SK-N-SH (cell line): ENCODE measurements at regions of chr22 and their contacts with region 1.

Region 1: DNA sequence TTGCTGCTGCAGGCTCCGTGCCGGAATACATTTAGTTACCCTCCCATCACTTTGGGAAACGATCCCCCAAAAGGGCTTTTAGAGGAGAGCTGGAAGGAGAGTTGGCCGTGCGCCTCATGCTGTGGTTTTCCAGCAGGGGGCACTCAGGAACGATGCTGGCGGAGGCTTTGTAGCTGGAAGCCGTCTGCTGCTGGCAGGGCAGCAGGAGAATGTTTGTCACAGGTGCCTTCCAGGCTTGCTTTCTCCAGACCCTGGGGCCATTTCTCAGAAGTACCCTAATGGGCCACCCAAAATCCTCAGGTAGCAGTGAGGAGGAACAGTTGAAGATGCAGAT is 30.0 kb upstream of the CABP7 start:
- DNase-seq: peak; percentile 79
- H3K4me3 ChIP-seq: peak overlapping the region in 1 of 2 experiments; percentile 49; a peak in 1 of 4 replicates
- H3K27ac ChIP-seq: no peak overlapping the region
- H3K4me1 ChIP-seq: peaks cover 15 to 43% of the 10 kb centered on the region in 2 experiments
- H3K27me3 ChIP-seq: no peaks in the 10 kb centered on the region
- CTCF ChIP-seq: peak; percentile 82
- EP300 ChIP-seq: no peak
- RAD21 ChIP-seq: peak; percentile 87

Region 2: GRCh38 chr22:29487426-29487986 is 202.3 kb before region 1 on chr22:
- CTCF ChIA-PET with region 1: no interaction called
- POLR2A ChIA-PET with region 1: no interaction called
- DNase-seq: no peak
- H3K4me3 ChIP-seq: no peak overlapping the region
- H3K27ac ChIP-seq: no peak overlapping the region
- H3K4me1 ChIP-seq: no peaks in the 10 kb centered on the region; a peak in 1 of 4 replicates
- H3K27me3 ChIP-seq: no peaks in the 10 kb centered on the region
- CTCF ChIP-seq: no peak
- EP300 ChIP-seq: no peak
- RAD21 ChIP-seq: no peak

Region 3: DNA sequence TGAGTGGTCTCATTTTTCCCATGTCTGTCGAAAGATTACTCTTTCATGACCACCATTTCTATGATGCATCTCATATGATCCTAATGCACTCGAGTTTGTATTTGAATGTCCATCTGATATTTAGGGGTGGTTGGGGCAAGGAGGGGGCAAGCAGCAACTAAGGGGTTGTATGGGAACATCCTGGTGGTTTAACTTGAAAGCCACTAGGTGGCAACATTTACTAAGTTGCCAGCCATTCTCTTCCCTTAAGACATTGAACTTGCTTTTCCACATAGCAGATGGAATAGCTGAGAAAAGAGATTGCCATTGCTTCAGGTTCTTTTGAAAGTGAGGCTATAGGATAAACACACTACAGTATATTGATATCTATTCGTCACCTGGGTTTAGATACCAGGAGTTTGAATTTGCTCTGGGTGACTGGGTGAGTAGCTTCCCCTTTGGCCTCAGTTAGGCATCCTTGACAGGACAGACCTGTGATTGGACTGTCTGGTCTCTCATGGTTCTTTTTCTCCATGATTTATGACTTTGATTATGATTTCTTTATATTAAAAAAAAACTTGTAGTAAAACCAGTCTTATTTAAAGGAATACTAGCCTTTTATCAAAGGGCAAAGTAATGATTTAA is 54.0 kb before region 1 on chr22:
- CTCF ChIA-PET with region 1: interaction called, 17 read pairs
- POLR2A ChIA-PET with region 1: no interaction called
- DNase-seq: peak; percentile 60
- H3K4me3 ChIP-seq: no peak overlapping the region; a peak in 1 of 4 replicates
- H3K27ac ChIP-seq: no peak overlapping the region
- H3K4me1 ChIP-seq: peaks cover 0 to 19% of the 10 kb centered on the region in 2 experiments; a peak in 2 of 4 replicates
- H3K27me3 ChIP-seq: no peaks in the 10 kb centered on the region
- CTCF ChIP-seq: peak; percentile 79
- EP300 ChIP-seq: no peak
- RAD21 ChIP-seq: peak; percentile 91

Region 4: GRCh38 chr22:29663180-29663821 is 26.5 kb before region 1 on chr22:
- CTCF ChIA-PET with region 1: interaction called, 13 read pairs
- POLR2A ChIA-PET with region 1: no interaction called
- DNase-seq: no peak
- H3K4me3 ChIP-seq: no peak overlapping the region
- H3K27ac ChIP-seq: no peak overlapping the region
- H3K4me1 ChIP-seq: no peaks in the 10 kb centered on the region; a peak in 1 of 4 replicates
- H3K27me3 ChIP-seq: no peaks in the 10 kb centered on the region
- CTCF ChIP-seq: no peak
- EP300 ChIP-seq: no peak
- RAD21 ChIP-seq: no peak

Region 5: GRCh38 chr22:29679316-29679715 is 10.5 kb before region 1 on chr22:
- CTCF ChIA-PET with region 1: interaction called, 25 read pairs
- POLR2A ChIA-PET with region 1: no interaction called
- DNase-seq: no peak
- H3K4me3 ChIP-seq: no peak overlapping the region
- H3K27ac ChIP-seq: no peak overlapping the region
- H3K4me1 ChIP-seq: no peaks in the 10 kb centered on the region
- H3K27me3 ChIP-seq: no peaks in the 10 kb centered on the region
- CTCF ChIP-seq: no peak
- EP300 ChIP-seq: no peak
- RAD21 ChIP-seq: no peak

Region 6: DNA sequence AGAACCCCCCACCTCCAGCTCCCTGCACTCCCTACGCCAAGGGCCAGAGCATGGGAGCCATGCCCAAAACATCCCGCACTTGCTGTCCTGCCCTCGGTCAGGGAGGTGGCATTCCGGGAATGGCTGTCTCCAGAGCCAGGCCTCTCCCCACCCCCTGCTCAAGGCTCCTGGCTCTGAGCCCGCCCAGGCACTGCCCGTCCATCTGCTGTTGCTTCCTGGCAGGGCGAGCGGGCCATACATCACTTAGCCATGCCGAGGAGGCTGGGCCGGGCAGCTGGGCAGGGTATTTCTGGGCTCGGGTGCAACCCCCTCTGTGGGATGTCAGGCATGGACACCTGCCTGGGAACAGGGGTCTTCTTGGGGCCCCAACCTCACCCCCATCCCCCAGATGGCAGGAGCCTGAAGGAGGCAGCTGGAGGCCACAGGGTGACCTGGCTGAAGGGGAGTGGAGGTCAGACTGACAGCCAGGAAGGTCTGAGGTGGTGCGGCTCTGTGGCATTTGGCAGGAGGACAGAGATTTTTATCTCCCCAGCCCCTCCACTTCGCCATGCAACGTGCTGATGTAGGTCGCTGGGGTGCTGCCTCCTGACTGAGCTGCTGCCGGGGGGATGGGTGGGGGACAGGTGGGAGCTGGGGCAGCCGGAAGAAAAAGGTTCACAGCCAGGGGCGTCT is 21.2 kb after region 1 on chr22:
- CTCF ChIA-PET with region 1: interaction called, 34 read pairs
- POLR2A ChIA-PET with region 1: interaction called, 5 read pairs
- DNase-seq: peak; percentile 92
- H3K4me3 ChIP-seq: peak overlapping the region in 1 of 2 experiments; percentile 17; a peak in 1 of 4 replicates
- H3K27ac ChIP-seq: peak overlapping the region in 1 of 2 experiments; percentile 97; a peak in 2 of 4 replicates
- H3K4me1 ChIP-seq: peaks cover 0 to 82% of the 10 kb centered on the region in 2 experiments; a peak in 1 of 4 replicates
- H3K27me3 ChIP-seq: no peaks in the 10 kb centered on the region
- CTCF ChIP-seq: no peak
- EP300 ChIP-seq: peak in 1 of 2 experiments; percentile 53; a peak in 2 of 4 replicates
- RAD21 ChIP-seq: peak; percentile 17; the same call in 1 of the 2 replicates

Region 7: DNA sequence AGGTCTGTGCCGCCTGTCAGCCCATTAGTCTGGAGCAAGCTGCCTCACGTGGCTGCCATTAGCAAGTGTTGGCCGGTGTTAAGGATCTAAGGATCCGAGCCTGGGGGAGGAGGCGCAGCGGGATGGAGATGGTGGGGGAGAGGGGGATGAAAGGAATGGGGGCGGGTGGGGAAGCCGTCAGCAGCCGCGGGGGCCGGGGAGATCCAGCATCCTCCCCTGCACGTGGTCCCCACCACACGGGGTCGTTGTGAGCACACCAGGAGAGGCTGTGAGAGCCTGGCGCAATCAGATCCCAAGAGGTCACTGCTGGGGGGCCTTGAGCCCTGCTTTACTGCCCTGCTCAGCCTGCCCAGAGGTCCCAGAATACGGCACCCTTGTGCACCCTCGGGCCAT is 37.3 kb after region 1 on chr22:
- CTCF ChIA-PET with region 1: interaction called, 17 read pairs
- POLR2A ChIA-PET with region 1: interaction called, 3 read pairs
- DNase-seq: peak; percentile 91
- H3K4me3 ChIP-seq: no peak overlapping the region
- H3K27ac ChIP-seq: no peak overlapping the region; a peak in 1 of 4 replicates
- H3K4me1 ChIP-seq: peaks cover 0 to 27% of the 10 kb centered on the region in 2 experiments; a peak in 1 of 4 replicates
- H3K27me3 ChIP-seq: no peaks in the 10 kb centered on the region
- CTCF ChIP-seq: peak; percentile 32
- EP300 ChIP-seq: no peak
- RAD21 ChIP-seq: peak; percentile 60

Region 8: GRCh38 chr22:30089655-30089974 is 399.8 kb after region 1 on chr22:
- CTCF ChIA-PET with region 1: interaction called, 52 read pairs
- POLR2A ChIA-PET with region 1: no interaction called
- DNase-seq: no peak
- H3K4me3 ChIP-seq: no peak overlapping the region
- H3K27ac ChIP-seq: peak overlapping the region in 1 of 2 experiments; percentile 12; a peak in 1 of 4 replicates
- H3K4me1 ChIP-seq: no peaks in the 10 kb centered on the region
- H3K27me3 ChIP-seq: no peaks in the 10 kb centered on the region
- CTCF ChIP-seq: no peak
- EP300 ChIP-seq: no peak
- RAD21 ChIP-seq: no peak